Activated naive CD4-positive, alpha-beta T cell treated with anti-CD3 and anti-CD28 coated beads for 36 hours (primary cell): ENCODE measurements at regions of chr22 and their contacts with region 1.

Region 1: DNA sequence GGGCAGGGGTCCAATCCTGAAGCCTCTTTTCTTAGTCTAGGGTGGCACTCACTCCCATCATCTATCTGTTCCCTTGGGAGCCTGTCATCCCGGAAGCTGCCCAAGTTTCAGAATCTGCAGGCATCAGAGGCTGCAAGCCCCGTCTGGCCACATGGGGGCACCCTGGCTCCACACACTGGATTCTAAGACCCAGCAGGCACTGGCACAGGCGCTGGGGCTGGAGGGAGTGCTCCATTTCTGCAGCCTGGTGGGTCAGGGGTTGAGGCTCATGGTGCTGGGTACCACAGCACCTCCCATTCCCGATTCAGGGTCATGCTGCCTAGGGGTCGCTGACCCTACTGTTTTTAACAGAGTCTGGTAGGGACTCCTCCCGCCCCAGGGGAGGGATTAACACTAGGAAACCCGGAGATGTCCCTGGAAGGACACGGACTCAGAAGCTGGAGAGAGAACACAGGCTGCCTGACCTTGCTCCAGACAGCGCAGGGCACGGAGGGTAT is 243.9 kb upstream of the SYN3 start:
- DNase-seq: peak; percentile 75
- H3K4me3 Mint-ChIP-seq: no peak overlapping the region
- H3K27ac Mint-ChIP-seq: no peak overlapping the region
- H3K4me1 Mint-ChIP-seq: no peaks in the 10 kb centered on the region
- H3K27me3 Mint-ChIP-seq: peaks cover 5% of the 10 kb centered on the region

Region 2: DNA sequence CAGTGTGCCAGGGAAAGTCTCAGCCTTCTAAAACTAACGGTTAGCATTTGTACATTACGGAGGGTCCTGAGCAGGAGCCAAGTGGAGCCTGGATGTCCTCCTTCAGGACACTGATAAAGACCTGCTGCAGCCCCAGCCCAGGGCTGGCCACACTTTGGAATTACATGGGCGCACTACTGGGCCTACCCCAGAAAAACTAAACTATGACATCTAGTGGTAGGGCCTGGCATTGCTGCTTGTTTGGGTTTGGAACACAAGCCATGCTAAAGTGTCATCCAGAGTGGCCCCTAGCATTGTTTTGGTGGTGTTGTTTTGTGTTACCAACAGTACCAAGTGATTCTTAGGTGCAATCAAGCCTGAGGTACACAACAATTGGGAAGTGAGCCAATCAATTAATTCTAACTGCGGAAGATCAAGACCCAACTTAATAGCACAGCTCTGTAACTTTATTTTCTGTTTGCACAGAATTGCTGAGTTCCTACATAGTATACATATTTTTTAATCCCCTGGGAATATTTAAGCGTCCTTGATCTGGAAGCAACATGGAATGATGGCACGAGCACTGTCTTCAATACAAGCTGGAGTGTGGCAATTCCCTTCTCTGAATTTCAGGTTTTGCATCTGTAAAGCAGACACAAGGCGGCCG is 277.5 kb after region 1 on chr22:
- CTCF ChIA-PET with region 1: interaction called, 4 read pairs
- intact Hi-C with region 1: loop called (anchors 2 kb)
- DNase-seq: peak; percentile 56
- H3K4me3 Mint-ChIP-seq: no peak overlapping the region
- H3K27ac Mint-ChIP-seq: no peak overlapping the region
- H3K4me1 Mint-ChIP-seq: no peaks in the 10 kb centered on the region
- H3K27me3 Mint-ChIP-seq: no peaks in the 10 kb centered on the region

Region 3: GRCh38 chr22:34111210-34111824 is 809.2 kb after region 1 on chr22:
- CTCF ChIA-PET with region 1: interaction called, 3 read pairs
- intact Hi-C with region 1: loop called (anchors 2 kb)
- DNase-seq: peak; percentile 18
- H3K4me3 Mint-ChIP-seq: no peak overlapping the region
- H3K27ac Mint-ChIP-seq: no peak overlapping the region
- H3K4me1 Mint-ChIP-seq: no peaks in the 10 kb centered on the region
- H3K27me3 Mint-ChIP-seq: peaks cover 8% of the 10 kb centered on the region